ENCODE measurements at regions of chr7 and their contacts with region 1.

Region 1: DNA sequence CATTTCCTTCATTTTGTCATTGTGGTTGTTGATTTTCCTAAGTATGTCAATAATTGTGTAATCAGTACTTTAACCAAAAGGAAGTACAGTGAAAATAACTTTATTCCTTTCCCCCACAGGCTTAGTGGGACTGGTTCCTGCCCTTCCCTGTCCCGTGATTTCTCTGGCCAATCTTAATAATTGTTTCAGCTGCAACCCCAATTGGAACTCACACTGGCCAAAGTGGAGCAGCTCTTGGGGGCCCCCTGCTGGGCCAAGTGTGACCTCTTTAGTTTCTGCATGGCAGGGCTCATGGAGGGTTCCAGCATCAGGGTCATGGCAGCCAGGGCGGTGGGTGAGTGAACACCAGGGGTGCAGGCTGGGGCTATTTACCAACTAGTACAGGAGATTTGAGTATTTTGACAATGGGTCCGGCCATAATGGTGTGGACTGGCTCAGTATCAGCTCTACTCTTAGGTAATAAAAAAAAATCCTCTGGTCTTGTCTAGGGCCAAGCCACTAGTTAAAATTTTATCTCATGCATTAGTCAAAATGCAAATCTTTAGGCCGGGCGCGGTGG is 31.7 kb downstream of the CYCS start:
- DNase-seq: peak; percentile 33 to 80 (median 60)
- ATAC-seq: peak; percentile 90
- H3K4me3 ChIP-seq: no peak overlapping the region
- H3K4me3 Mint-ChIP-seq: no peak overlapping the region
- H3K27ac ChIP-seq: no peak overlapping the region
- H3K27ac Mint-ChIP-seq: no peak overlapping the region
- H3K4me1 ChIP-seq: no peaks in the 10 kb centered on the region
- H3K4me1 Mint-ChIP-seq: peaks cover 0 to 15% (median 8%) of the 10 kb centered on the region in 7 donors
- H3K27me3 ChIP-seq: no peaks in the 10 kb centered on the region
- H3K27me3 Mint-ChIP-seq: peaks cover 0 to 14% (median 0%) of the 10 kb centered on the region in 5 donors

Region 2: GRCh38 chr7:23546897-23547572 is 1546.3 kb before region 1 on chr7:
- CTCF ChIA-PET with region 1: no interaction called
- POLR2A ChIA-PET with region 1: no interaction called
- intact Hi-C with region 1: loop called (anchors 10 kb)
- DNase-seq: peak; percentile 37 to 89 (median 82)
- ATAC-seq: peak; percentile 98
- H3K4me3 ChIP-seq: no peak overlapping the region
- H3K4me3 Mint-ChIP-seq: no peak overlapping the region
- H3K27ac ChIP-seq: no peak overlapping the region
- H3K27ac Mint-ChIP-seq: peak overlapping the region in 6 of 9 donors; percentile 22 to 90 (median 40)
- H3K4me1 ChIP-seq: no peaks in the 10 kb centered on the region
- H3K4me1 Mint-ChIP-seq: peaks cover 0 to 14% (median 5%) of the 10 kb centered on the region in 7 donors
- H3K27me3 ChIP-seq: no peaks in the 10 kb centered on the region
- H3K27me3 Mint-ChIP-seq: peaks cover 0 to 5% (median 0%) of the 10 kb centered on the region in 5 donors

Region 3: DNA sequence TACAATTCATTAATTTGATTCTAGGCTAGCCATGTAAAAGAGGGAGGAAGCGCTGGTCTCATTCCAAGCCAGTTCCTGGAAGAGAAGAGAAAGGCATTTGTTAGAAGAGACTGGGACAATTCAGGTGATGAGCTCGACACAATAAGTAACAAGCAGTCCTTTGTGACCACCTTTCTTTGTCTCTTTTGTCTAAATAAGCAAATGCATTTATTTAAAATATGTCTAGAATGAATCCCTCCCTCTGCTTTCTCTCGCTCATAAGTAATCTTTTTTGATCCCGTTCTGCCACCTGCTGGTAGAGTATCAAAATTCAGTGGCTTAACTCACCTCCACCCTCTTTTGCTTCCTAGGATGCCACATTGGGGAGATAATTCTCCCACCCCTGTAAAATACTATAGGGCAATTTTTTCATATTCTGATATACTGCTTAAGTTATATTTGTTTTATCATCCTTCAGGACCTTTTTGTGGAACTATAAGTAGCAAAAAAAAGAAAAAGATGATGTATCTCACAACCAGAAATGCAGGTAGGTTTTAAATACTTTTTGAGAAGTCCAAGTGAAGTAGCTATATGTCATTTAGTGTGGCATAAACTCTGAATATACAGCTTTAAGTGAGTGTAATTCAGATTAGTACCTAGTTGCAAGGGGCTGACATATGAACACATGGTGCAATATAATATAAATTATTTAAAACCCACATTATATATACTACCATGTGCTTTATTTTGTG is 427.6 kb before region 1 on chr7:
- CTCF ChIA-PET with region 1: no interaction called
- POLR2A ChIA-PET with region 1: no interaction called
- intact Hi-C with region 1: loop called (anchors 1 to 5 kb)
- DNase-seq: peak in 8 of 9 donors; percentile 14 to 59 (median 37)
- ATAC-seq: peak; percentile 52
- H3K4me3 ChIP-seq: no peak overlapping the region
- H3K4me3 Mint-ChIP-seq: no peak overlapping the region
- H3K27ac ChIP-seq: no peak overlapping the region
- H3K27ac Mint-ChIP-seq: peak overlapping the region in 1 of 9 donors; percentile 21
- H3K4me1 ChIP-seq: no peaks in the 10 kb centered on the region
- H3K4me1 Mint-ChIP-seq: peaks cover 0 to 4% (median 0%) of the 10 kb centered on the region in 7 donors
- H3K27me3 ChIP-seq: no peaks in the 10 kb centered on the region
- H3K27me3 Mint-ChIP-seq: no peaks in the 10 kb centered on the region

Region 4: GRCh38 chr7:25069900-25070443 is 23.4 kb before region 1 on chr7:
- CTCF ChIA-PET with region 1: interaction called, 12 read pairs
- POLR2A ChIA-PET with region 1: no interaction called
- intact Hi-C with region 1: loop called (anchors 1 to 2 kb)
- DNase-seq: peak in 8 of 9 donors; percentile 27 to 63 (median 54)
- ATAC-seq: peak; percentile 74
- H3K4me3 ChIP-seq: no peak overlapping the region
- H3K4me3 Mint-ChIP-seq: no peak overlapping the region
- H3K27ac ChIP-seq: no peak overlapping the region
- H3K27ac Mint-ChIP-seq: no peak overlapping the region
- H3K4me1 ChIP-seq: no peaks in the 10 kb centered on the region
- H3K4me1 Mint-ChIP-seq: peaks cover 0 to 17% (median 0%) of the 10 kb centered on the region in 7 donors
- H3K27me3 ChIP-seq: no peaks in the 10 kb centered on the region
- H3K27me3 Mint-ChIP-seq: no peaks in the 10 kb centered on the region

Region 5: GRCh38 chr7:25158966-25159365 is 65.6 kb after region 1 on chr7:
- CTCF ChIA-PET with region 1: no interaction called
- POLR2A ChIA-PET with region 1: no interaction called
- intact Hi-C with region 1: loop called in 1 of 2 experiments (anchors 1 kb)
- DNase-seq: no peak
- ATAC-seq: no peak
- H3K4me3 ChIP-seq: no peak overlapping the region
- H3K4me3 Mint-ChIP-seq: no peak overlapping the region
- H3K27ac ChIP-seq: no peak overlapping the region
- H3K27ac Mint-ChIP-seq: no peak overlapping the region
- H3K4me1 ChIP-seq: no peaks in the 10 kb centered on the region
- H3K4me1 Mint-ChIP-seq: peaks cover 0 to 5% (median 4%) of the 10 kb centered on the region in 7 donors
- H3K27me3 ChIP-seq: no peaks in the 10 kb centered on the region
- H3K27me3 Mint-ChIP-seq: no peaks in the 10 kb centered on the region

Region 6: DNA sequence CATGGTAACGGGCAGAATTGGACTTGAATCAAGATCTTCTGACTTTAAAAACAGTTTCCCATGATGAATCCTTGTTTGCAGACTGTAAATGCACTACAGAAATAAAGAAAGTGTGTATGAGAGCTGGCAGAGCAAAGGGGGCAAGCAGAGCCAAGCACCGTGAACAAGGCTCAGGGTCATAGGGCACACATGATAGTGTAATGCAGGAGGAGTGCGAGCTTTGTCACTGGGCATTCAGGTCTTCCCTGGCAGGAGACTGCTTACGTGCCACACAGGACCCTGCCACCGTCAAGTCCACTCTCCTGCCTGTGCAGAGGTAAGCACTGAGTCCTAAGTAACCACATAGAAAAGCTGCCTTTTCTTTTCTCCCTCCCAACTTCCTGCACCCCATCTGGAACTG is 228.1 kb after region 1 on chr7:
- CTCF ChIA-PET with region 1: no interaction called
- POLR2A ChIA-PET with region 1: no interaction called
- intact Hi-C with region 1: no loop called
- DNase-seq: no peak
- ATAC-seq: no peak
- H3K4me3 ChIP-seq: no peak overlapping the region
- H3K4me3 Mint-ChIP-seq: no peak overlapping the region
- H3K27ac ChIP-seq: no peak overlapping the region
- H3K27ac Mint-ChIP-seq: no peak overlapping the region
- H3K4me1 ChIP-seq: no peaks in the 10 kb centered on the region
- H3K4me1 Mint-ChIP-seq: peaks cover 0 to 7% (median 0%) of the 10 kb centered on the region in 7 donors
- H3K27me3 ChIP-seq: no peaks in the 10 kb centered on the region
- H3K27me3 Mint-ChIP-seq: peaks cover 7 to 18% (median 10%) of the 10 kb centered on the region in 5 donors